Left ventricle myocardium inferior (tissue), 1 donor: ENCODE measurements at regions of chr16 and their contacts with region 1.

Region 1: GRCh38 chr16:22948603-22949368 is 134.8 kb downstream of the HS3ST2 start:
- DNase-seq: peak; percentile 39
- H3K4me3 ChIP-seq: peak overlapping the region; percentile 49
- H3K27ac ChIP-seq: no peak overlapping the region
- H3K4me1 ChIP-seq: peaks cover 14% of the 10 kb centered on the region
- H3K27me3 ChIP-seq: peaks cover 59% of the 10 kb centered on the region
- CTCF ChIP-seq: peak; percentile 79

Region 2: GRCh38 chr16:22898874-22899348 is 49.9 kb before region 1 on chr16:
- intact Hi-C with region 1: loop called (anchors 5 kb)
- DNase-seq: peak; percentile 68
- H3K4me3 ChIP-seq: no peak overlapping the region
- H3K27ac ChIP-seq: peak overlapping the region; percentile 47
- H3K4me1 ChIP-seq: peaks cover 17% of the 10 kb centered on the region
- H3K27me3 ChIP-seq: peaks cover 80% of the 10 kb centered on the region
- CTCF ChIP-seq: peak; percentile 91